CD8-positive, alpha-beta memory T cell (primary cell): ENCODE measurements at regions of chr5 and their contacts with region 1.

Region 1: GRCh38 chr5:148820461-148821395 is 5.7 kb upstream of the ADRB2 start:
- DNase-seq: peak in 3 of 5 donors; percentile 24 to 53 (median 31)
- H3K4me3 ChIP-seq: no peak overlapping the region
- H3K4me3 Mint-ChIP-seq: no peak overlapping the region
- H3K27ac ChIP-seq: no peak overlapping the region
- H3K27ac Mint-ChIP-seq: no peak overlapping the region
- H3K4me1 ChIP-seq: no peaks in the 10 kb centered on the region
- H3K4me1 Mint-ChIP-seq: peaks cover 12 to 18% (median 17%) of the 10 kb centered on the region in 3 donors
- H3K27me3 ChIP-seq: no peaks in the 10 kb centered on the region
- H3K27me3 Mint-ChIP-seq: peaks cover 0 to 1% of the 10 kb centered on the region in 2 donors

Region 2: DNA sequence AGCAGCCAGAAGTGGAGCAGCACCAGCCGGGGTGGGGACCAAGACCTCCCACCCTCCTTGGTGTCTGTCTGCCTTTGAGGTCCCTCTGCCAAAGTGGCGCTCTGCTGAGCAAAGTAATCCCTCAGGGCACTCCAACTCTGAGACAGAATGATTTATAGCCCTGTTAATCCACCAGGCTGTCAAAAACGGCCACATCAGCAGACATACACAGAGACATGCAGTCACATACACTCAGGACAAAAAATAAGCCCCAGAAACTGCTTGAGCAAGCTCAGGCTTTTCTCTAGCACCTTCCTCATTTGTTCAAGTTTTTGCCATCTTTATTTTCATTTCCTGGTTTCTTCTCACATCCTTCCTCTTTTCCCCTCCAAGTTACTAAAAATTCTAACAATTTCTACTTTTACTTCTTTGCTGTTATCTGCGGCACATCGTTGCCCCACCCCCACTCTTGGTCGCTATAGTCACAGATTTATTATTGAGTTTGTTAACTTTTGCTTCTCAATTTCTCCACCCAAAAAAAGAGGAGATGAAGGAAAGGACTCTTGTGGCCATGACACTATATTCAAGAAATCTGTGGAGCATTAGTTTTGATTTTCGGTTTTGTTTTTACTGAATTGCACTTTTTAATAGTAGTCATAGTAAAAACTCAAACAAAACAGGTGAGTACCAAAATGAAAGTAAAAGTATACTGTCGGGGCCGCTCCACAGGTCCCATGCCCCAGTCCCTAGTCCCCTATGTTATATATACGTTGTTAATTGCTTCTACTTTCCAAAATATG is 11.7 kb before region 1 on chr5:
- CTCF ChIA-PET with region 1: interaction called, 21 read pairs
- POLR2A ChIA-PET with region 1: interaction called, 5 read pairs
- DNase-seq: peak in 3 of 5 donors; percentile 46 to 56 (median 52)
- H3K4me3 ChIP-seq: peak overlapping the region; percentile 75
- H3K4me3 Mint-ChIP-seq: peak overlapping the region; percentile 88 to 96 (median 94)
- H3K27ac ChIP-seq: peak overlapping the region; percentile 55
- H3K27ac Mint-ChIP-seq: peak overlapping the region; percentile 74 to 98 (median 94)
- H3K4me1 ChIP-seq: peaks cover 15% of the 10 kb centered on the region
- H3K4me1 Mint-ChIP-seq: peaks cover 32 to 42% (median 39%) of the 10 kb centered on the region in 3 donors
- H3K27me3 ChIP-seq: no peaks in the 10 kb centered on the region
- H3K27me3 Mint-ChIP-seq: no peaks in the 10 kb centered on the region

Region 3: GRCh38 chr5:148831590-148832565 is 11.2 kb after region 1 on chr5:
- CTCF ChIA-PET with region 1: interaction called, 11 read pairs
- POLR2A ChIA-PET with region 1: no interaction called
- DNase-seq: no peak
- H3K4me3 ChIP-seq: peak overlapping the region; percentile 78
- H3K4me3 Mint-ChIP-seq: peak overlapping the region; percentile 90 to 99 (median 95)
- H3K27ac ChIP-seq: no peak overlapping the region
- H3K27ac Mint-ChIP-seq: peak overlapping the region; percentile 64 to 93 (median 90)
- H3K4me1 ChIP-seq: peaks cover 22% of the 10 kb centered on the region
- H3K4me1 Mint-ChIP-seq: peaks cover 88 to 98% (median 98%) of the 10 kb centered on the region in 3 donors
- H3K27me3 ChIP-seq: no peaks in the 10 kb centered on the region
- H3K27me3 Mint-ChIP-seq: peaks cover 0 to 2% of the 10 kb centered on the region in 2 donors

Region 4: GRCh38 chr5:148949841-148950470 is 129.2 kb after region 1 on chr5:
- CTCF ChIA-PET with region 1: interaction called, 13 read pairs
- POLR2A ChIA-PET with region 1: no interaction called
- DNase-seq: no peak
- H3K4me3 ChIP-seq: no peak overlapping the region
- H3K4me3 Mint-ChIP-seq: no peak overlapping the region
- H3K27ac ChIP-seq: no peak overlapping the region
- H3K27ac Mint-ChIP-seq: peak overlapping the region in 3 of 8 donors; percentile 29 to 46 (median 34)
- H3K4me1 ChIP-seq: no peaks in the 10 kb centered on the region
- H3K4me1 Mint-ChIP-seq: no peaks in the 10 kb centered on the region
- H3K27me3 ChIP-seq: no peaks in the 10 kb centered on the region
- H3K27me3 Mint-ChIP-seq: peaks cover 0 to 2% of the 10 kb centered on the region in 2 donors